ENCODE measurements at regions of chr17 and their contacts with region 1.

Region 1: DNA sequence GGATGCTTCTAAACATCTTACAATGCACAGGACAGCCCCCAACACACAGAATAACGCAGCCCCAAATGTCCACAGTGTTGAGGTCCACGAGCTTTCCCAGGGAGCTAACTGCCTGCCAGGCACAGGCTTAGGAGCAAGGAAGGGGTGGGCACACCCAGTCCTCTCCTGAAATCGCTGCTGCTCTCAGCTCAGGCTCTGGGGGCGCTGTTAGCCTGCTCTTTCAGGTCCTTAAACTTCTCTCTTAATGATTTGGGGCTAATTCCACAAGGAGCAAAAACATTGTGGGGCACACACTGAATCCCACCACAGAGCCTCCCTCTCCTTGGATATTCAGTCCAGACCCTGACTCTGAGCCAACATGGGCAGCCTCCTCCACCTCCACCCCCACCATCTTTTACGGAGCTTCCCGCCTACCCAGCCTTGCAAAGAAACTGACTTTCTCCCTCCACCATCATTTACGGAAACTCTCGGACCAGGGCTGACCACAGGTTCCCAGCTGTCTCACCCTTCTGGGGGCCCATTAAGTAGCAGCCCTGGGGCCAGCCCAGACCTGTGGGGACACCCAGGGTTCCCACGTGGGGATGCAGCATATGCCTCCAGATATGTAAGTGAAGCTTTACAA is 1.1 kb downstream of the CD300H start:
- DNase-seq: peak; percentile 31 to 85
- H3K4me3 ChIP-seq: no peak overlapping the region
- H3K27ac ChIP-seq: no peak overlapping the region
- H3K4me1 ChIP-seq: peaks cover 0 to 3% (median 2%) of the 10 kb centered on the region in 4 experiments; a peak in 3 of 7 replicates
- H3K27me3 ChIP-seq: peaks cover 0 to 2% (median 0%) of the 10 kb centered on the region in 4 experiments; a peak in 2 of 7 replicates
- CTCF ChIP-seq: peak; percentile 72 to 95 (median 76)
- EP300 ChIP-seq: no peak
- POLR2A ChIP-seq: no peak
- RAD21 ChIP-seq: peak; percentile 71 to 77

Region 2: GRCh38 chr17:74335529-74336062 is 230.6 kb before region 1 on chr17:
- CTCF ChIA-PET with region 1: no interaction called
- POLR2A ChIA-PET with region 1: no interaction called
- DNase-seq: no peak
- H3K4me3 ChIP-seq: no peak overlapping the region
- H3K27ac ChIP-seq: no peak overlapping the region
- H3K4me1 ChIP-seq: peaks cover 0 to 9% (median 3%) of the 10 kb centered on the region in 4 experiments; a peak in 4 of 7 replicates
- H3K27me3 ChIP-seq: no peaks in the 10 kb centered on the region; a peak in 1 of 7 replicates
- CTCF ChIP-seq: no peak
- EP300 ChIP-seq: no peak
- POLR2A ChIP-seq: no peak
- RAD21 ChIP-seq: no peak

Region 3: GRCh38 chr17:74554909-74555308 is 11.3 kb before region 1 on chr17:
- CTCF ChIA-PET with region 1: interaction called, 21 read pairs
- POLR2A ChIA-PET with region 1: no interaction called
- DNase-seq: no peak
- H3K4me3 ChIP-seq: no peak overlapping the region
- H3K27ac ChIP-seq: no peak overlapping the region
- H3K4me1 ChIP-seq: no peaks in the 10 kb centered on the region
- H3K27me3 ChIP-seq: peaks cover 0 to 2% (median 0%) of the 10 kb centered on the region in 4 experiments; a peak in 1 of 7 replicates
- CTCF ChIP-seq: no peak
- EP300 ChIP-seq: no peak
- POLR2A ChIP-seq: no peak
- RAD21 ChIP-seq: no peak

Region 4: DNA sequence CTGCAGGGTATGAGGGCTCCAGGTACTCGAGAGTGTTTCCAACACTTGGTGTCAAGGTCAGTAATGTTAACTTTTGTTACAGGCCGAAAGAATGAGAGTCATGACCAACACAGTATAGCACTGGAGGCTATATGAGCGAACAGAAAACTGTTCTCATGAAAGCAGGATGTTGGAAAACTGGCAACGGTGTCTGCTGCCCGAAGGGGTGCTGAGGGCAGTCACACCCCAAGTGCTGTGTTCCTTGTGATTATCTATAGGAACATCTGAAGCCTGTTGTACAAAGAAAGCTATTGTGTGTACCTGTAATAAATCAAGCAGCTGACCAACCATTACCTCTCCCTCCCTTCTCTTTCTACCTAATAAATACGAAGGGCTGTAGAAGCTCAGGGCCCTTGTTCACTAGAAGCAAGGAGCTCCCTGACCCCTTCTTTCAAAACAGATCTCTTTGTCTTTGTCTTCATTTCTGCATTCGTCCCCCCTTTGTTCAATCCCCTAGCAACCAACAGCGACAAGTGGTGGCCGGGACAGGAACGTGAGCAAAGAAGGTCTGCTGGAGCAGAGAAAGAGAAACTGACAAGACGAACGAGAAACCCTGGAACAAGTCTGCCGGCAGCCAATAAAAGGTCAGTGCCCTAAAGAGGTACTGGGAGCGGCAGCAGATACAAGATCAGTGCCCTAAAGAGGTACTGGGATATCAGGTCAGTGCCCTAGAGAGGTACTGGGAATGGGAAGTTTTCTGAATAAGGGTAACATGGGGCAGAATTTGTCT is 18.2 kb after region 1 on chr17:
- CTCF ChIA-PET with region 1: interaction called, 16 read pairs
- POLR2A ChIA-PET with region 1: interaction called, 3 read pairs
- DNase-seq: no peak
- H3K4me3 ChIP-seq: no peak overlapping the region
- H3K27ac ChIP-seq: no peak overlapping the region
- H3K4me1 ChIP-seq: no peaks in the 10 kb centered on the region
- H3K27me3 ChIP-seq: peaks cover 0 to 1% (median 0%) of the 10 kb centered on the region in 4 experiments; a peak in 2 of 7 replicates
- CTCF ChIP-seq: no peak
- EP300 ChIP-seq: no peak
- POLR2A ChIP-seq: no peak
- RAD21 ChIP-seq: no peak

Region 5: DNA sequence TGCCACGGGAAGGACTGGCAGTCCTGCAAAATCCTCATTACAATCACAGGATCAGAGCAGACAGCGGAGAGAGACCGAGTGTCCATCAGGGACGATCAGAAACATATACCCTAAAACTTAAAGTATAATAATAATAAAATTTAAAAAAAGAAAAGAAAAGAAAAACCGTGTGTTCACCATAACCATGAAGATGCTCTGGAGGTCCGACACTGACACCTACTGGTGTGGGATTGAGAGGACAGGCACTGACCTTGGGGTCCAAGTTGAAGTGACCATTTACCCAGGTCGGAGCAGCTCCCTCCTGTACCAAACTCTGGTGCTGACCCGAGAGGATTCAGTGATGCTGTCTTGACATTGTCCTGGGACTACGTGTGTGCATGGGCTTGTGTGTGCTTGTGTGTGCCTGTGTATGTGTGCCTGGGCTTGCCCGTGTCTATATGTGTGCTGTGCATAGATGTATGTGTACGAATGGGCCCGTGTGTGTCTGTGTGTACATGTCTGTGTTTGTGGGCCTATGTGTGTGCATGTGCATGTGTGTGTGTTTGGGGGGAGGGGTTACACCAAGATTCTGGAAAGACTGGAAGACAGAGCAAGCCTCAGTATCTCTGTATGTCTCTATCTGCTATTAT is 35.8 kb after region 1 on chr17:
- CTCF ChIA-PET with region 1: interaction called, 33 read pairs
- POLR2A ChIA-PET with region 1: no interaction called
- DNase-seq: peak in 1 of 2 experiments; percentile 65
- H3K4me3 ChIP-seq: no peak overlapping the region
- H3K27ac ChIP-seq: no peak overlapping the region
- H3K4me1 ChIP-seq: peaks cover 0 to 6% (median 2%) of the 10 kb centered on the region in 4 experiments; a peak in 1 of 7 replicates
- H3K27me3 ChIP-seq: peaks cover 0 to 2% (median 0%) of the 10 kb centered on the region in 4 experiments; a peak in 1 of 7 replicates
- CTCF ChIP-seq: peak; percentile 72 to 77 (median 73)
- EP300 ChIP-seq: no peak
- POLR2A ChIP-seq: no peak
- RAD21 ChIP-seq: peak; percentile 79 to 83

Region 6: DNA sequence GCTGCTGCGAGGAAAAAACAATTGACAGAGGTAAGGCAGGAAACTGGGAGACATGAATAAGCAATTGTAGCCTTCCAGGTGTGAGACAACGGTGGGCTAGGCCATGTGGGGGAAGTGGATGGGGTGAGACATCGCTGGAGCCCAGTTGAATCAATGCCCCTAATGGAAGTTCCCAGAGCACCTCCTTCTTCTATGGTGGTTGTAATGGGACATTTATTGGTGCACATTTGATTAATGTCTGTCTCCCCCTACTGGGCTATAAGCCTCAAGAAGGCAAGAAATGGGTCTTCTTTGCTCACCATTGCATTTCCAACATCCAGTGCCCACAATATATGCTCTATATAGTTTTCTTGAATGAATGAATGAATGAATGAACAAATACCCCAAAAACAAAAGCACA is 80.0 kb after region 1 on chr17:
- CTCF ChIA-PET with region 1: interaction called, 14 read pairs
- POLR2A ChIA-PET with region 1: no interaction called
- DNase-seq: no peak
- H3K4me3 ChIP-seq: no peak overlapping the region
- H3K27ac ChIP-seq: no peak overlapping the region
- H3K4me1 ChIP-seq: peaks cover 0 to 2% (median 2%) of the 10 kb centered on the region in 4 experiments; a peak in 2 of 7 replicates
- H3K27me3 ChIP-seq: peaks cover 0 to 2% (median 0%) of the 10 kb centered on the region in 4 experiments; a peak in 2 of 7 replicates
- CTCF ChIP-seq: peak in 2 of 3 experiments; percentile 49 to 54; a peak in 3 of 4 replicates
- EP300 ChIP-seq: no peak
- POLR2A ChIP-seq: no peak
- RAD21 ChIP-seq: peak; percentile 51 to 59

Region 7: GRCh38 chr17:74687886-74688285 is 121.6 kb after region 1 on chr17:
- CTCF ChIA-PET with region 1: no interaction called
- POLR2A ChIA-PET with region 1: no interaction called
- DNase-seq: no peak
- H3K4me3 ChIP-seq: no peak overlapping the region
- H3K27ac ChIP-seq: no peak overlapping the region
- H3K4me1 ChIP-seq: no peaks in the 10 kb centered on the region
- H3K27me3 ChIP-seq: no peaks in the 10 kb centered on the region; a peak in 1 of 7 replicates
- CTCF ChIP-seq: no peak
- EP300 ChIP-seq: no peak
- POLR2A ChIP-seq: no peak
- RAD21 ChIP-seq: no peak

Region 8: GRCh38 chr17:74815550-74816370 is 249.5 kb after region 1 on chr17:
- CTCF ChIA-PET with region 1: no interaction called
- POLR2A ChIA-PET with region 1: no interaction called
- DNase-seq: peak in 1 of 2 experiments; percentile 77
- H3K4me3 ChIP-seq: no peak overlapping the region
- H3K27ac ChIP-seq: no peak overlapping the region
- H3K4me1 ChIP-seq: peaks cover 0 to 4% (median 1%) of the 10 kb centered on the region in 4 experiments; a peak in 2 of 7 replicates
- H3K27me3 ChIP-seq: peaks cover 0 to 2% (median 0%) of the 10 kb centered on the region in 4 experiments; a peak in 3 of 7 replicates
- CTCF ChIP-seq: peak; percentile 71 to 94 (median 85)
- EP300 ChIP-seq: no peak
- POLR2A ChIP-seq: no peak
- RAD21 ChIP-seq: peak; percentile 58 to 61